Mammary epithelial cell (primary cell): ENCODE measurements at regions of chr3 and their contacts with region 1.

Region 1: GRCh38 chr3:10764259-10765051 is 51.6 kb upstream of the SLC6A11 start:
- DNase-seq: no peak
- H3K4me3 ChIP-seq: no peak overlapping the region
- H3K27ac ChIP-seq: no peak overlapping the region
- H3K4me1 ChIP-seq: no peaks in the 10 kb centered on the region
- H3K27me3 ChIP-seq: no peaks in the 10 kb centered on the region
- CTCF ChIP-seq: no peak

Region 2: DNA sequence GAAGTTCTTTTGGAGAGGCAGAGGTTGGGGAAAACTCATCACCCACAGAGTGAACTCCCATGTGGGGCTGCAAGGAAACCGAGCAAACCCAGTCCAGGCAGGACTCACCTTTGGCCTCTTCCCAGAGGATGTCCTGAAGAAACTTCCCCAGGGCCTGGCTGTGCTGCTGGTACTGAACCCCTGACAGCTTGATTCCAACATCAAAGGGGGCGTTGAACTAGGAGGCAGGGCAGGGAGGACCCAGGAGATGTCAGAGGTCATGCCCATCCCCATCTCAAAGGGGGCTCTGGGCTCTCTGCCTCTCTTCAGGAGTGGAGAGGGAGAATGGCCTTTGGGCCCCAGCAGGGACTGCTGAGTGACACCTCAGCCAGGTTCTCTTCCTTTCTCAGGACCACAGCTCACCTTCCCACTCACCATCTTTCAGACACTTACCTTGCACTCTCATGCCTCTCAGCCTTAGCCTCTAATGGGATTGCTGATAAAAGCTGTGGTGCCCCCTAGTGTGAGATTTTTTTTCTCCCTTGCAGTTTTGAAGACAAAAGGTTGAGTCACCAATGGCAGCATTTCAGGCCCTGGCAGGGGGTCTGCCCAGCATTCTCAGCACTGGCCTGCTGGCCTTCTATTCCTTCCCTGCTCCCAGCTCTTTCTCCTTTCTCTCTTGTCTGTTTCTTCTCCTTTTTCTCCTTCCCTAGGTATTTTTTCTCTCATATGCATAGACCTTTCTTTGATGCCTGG is 477.7 kb before region 1 on chr3:
- CTCF ChIA-PET with region 1: no interaction called
- dilution Hi-C with region 1: no loop called
- in situ Hi-C with region 1: no loop called
- intact Hi-C with region 1: no loop called
- DNase-seq: peak; percentile 39
- H3K4me3 ChIP-seq: no peak overlapping the region
- H3K27ac ChIP-seq: no peak overlapping the region
- H3K4me1 ChIP-seq: no peaks in the 10 kb centered on the region
- H3K27me3 ChIP-seq: no peaks in the 10 kb centered on the region
- CTCF ChIP-seq: no peak

Region 3: DNA sequence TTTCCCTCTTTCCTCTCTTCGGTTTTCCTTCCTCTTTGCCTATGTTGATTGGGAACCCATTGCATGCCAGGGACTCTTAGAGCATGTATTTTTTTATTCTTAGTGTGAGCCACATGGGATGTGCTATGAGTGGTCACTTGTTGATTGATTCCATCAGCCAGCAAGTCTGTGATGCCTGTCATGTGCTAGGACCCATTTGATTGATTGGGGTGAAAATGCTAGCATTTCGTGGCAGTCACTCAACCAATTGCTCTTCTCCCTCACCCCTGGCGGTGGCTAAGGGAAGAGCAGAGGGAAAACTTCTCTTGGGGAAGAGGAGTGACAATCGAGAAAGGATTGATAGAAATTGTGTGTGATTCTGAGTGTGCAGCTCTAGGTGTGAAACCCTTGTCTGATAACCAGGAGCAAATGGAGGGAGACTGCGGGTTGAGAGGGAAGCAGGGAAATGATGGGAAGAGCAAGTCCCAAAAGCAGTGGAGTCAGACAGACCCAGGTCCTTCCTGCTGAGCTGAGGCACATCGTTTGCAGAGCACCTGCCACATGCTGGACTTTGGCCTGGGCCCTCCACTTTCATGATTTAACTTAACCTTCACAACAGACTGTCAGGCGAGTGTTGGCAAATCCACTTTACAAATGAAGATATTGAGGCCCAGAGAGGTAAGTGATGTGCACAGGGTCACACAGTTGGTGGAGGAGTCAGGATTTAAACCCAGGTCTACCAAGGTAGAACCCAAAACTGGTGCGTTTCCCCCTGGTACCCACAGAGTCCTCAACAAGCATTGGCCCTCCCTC is 91.6 kb after region 1 on chr3:
- CTCF ChIA-PET with region 1: no interaction called
- dilution Hi-C with region 1: loop called (anchors 5 kb)
- in situ Hi-C with region 1: no loop called
- intact Hi-C with region 1: no loop called
- DNase-seq: no peak
- H3K4me3 ChIP-seq: no peak overlapping the region
- H3K27ac ChIP-seq: no peak overlapping the region
- H3K4me1 ChIP-seq: no peaks in the 10 kb centered on the region
- H3K27me3 ChIP-seq: no peaks in the 10 kb centered on the region
- CTCF ChIP-seq: peak; percentile 34 to 36